Activated CD8-positive, alpha-beta T cell treated with anti-CD3 and anti-CD28 coated beads for 36 hours (primary cell): ENCODE measurements at regions of chr11 and their contacts with region 1.

Region 1: DNA sequence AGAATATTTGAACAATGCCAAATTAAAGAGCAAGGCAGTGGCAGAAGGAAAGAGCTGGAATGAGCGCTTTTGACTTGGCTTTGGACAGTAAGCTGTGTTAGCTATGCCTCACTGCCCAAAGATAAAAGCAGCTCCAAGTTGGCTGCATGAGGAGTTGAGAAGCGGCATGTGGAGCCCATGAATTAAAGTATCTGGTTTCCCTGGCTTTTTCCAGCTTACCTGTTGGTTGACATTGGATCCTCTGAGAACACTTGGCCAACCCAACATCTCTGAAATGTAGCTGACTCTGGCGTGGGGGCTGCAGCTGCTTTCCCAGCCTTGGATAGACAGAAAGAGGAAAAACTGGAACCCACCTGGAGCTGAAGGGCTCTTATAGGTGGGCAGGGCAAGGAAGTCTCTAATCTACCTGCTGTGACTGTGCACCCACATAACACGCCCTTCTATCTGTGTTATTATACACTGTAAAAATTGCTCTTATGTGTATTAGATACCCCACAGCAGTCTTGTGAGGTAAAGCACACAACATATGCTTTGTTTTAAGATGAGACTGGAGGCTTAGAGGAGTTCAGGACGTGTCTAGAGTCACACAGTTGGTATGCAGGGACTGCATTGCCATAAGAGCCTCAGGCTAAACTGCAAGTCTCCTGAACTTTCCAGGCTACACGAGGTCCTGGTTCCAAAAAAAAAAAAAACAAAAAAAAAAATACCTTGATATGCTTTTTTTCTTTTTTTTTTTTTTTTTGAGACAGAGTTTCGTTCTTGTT is 5.8 kb downstream of the UBASH3B start:
- DNase-seq: no peak
- ATAC-seq: no peak
- H3K4me3 Mint-ChIP-seq: no peak overlapping the region
- H3K27ac Mint-ChIP-seq: no peak overlapping the region
- H3K4me1 Mint-ChIP-seq: peaks cover 49% of the 10 kb centered on the region
- H3K27me3 Mint-ChIP-seq: no peaks in the 10 kb centered on the region
- CTCF ChIP-seq: no peak

Region 2: GRCh38 chr11:122468965-122469364 is 192.4 kb before region 1 on chr11:
- CTCF ChIA-PET with region 1: no interaction called
- POLR2A ChIA-PET with region 1: no interaction called
- intact Hi-C with region 1: no loop called
- DNase-seq: no peak
- ATAC-seq: no peak
- H3K4me3 Mint-ChIP-seq: no peak overlapping the region
- H3K27ac Mint-ChIP-seq: no peak overlapping the region
- H3K4me1 Mint-ChIP-seq: no peaks in the 10 kb centered on the region
- H3K27me3 Mint-ChIP-seq: peaks cover 3% of the 10 kb centered on the region
- CTCF ChIP-seq: no peak

Region 3: DNA sequence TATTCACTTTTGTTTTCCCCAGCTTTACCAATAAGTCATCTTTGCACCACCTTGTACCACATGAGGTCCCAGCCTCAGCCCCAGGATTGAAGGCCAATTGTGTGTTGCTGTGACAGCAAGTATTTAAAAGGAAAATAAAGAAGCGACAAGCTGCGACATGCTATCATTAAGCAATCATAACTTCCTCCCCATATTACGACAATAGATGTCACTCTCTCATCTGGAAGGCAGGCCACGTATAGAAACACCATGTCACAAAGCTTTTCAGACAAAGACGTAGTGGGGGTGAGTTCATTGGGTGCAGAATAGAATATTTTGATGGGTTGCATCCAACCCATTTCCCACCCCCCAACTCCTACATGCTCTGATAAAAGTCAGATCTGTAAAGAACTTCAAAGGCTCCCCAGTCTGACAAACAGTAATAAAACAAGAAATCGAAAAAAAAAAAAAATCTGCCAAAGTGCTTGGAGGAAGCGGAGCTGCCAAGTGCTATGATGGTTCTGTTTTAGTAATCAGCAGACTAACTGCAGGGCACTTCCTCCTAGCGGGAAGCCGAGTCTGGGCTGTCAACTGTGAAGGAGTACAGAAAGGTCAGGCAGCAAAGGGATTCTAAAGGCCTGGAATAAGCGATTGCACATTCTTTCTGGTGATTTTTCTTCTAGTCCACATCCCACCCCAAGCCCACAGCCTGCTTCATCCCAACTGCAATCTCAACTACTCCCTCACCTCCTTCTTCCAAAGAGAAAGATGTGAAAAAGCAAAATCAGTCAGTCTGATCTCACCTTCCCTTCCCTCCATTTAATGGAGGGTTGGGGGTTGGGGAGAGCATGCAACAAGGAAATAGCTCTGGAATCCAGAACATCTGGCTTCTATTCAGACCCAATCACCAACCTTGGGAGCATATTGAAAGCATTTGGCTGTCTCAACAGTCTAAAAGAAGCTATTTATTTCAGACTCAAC is 137.2 kb before region 1 on chr11:
- CTCF ChIA-PET with region 1: no interaction called
- POLR2A ChIA-PET with region 1: no interaction called
- intact Hi-C with region 1: no loop called
- DNase-seq: no peak
- ATAC-seq: no peak
- H3K4me3 Mint-ChIP-seq: no peak overlapping the region
- H3K27ac Mint-ChIP-seq: no peak overlapping the region
- H3K4me1 Mint-ChIP-seq: no peaks in the 10 kb centered on the region
- H3K27me3 Mint-ChIP-seq: peaks cover 27% of the 10 kb centered on the region
- CTCF ChIP-seq: no peak

Region 4: DNA sequence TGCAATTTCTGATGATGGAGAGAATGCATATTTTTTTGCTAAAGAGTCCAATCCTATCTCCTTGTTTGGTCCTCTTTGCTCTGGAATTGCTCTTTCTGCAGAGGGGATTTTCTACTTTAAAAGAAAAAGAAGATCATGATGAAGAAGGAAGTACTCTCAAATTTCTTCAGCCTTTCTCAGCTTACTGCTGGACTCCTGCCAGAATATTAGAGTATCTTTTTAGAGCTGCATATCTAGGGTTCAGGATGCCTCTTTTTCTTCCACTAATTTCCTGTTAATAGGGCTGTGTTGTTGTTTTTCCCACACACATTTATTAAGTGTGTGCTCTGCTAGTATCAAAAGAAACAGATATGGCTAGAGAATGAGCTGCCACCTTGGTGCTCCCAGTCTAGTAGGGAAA is 12.3 kb after region 1 on chr11:
- CTCF ChIA-PET with region 1: interaction called, 33 read pairs
- POLR2A ChIA-PET with region 1: interaction called, 32 read pairs
- intact Hi-C with region 1: no loop called
- DNase-seq: no peak
- ATAC-seq: no peak
- H3K4me3 Mint-ChIP-seq: no peak overlapping the region
- H3K27ac Mint-ChIP-seq: no peak overlapping the region
- H3K4me1 Mint-ChIP-seq: peaks cover 70% of the 10 kb centered on the region
- H3K27me3 Mint-ChIP-seq: no peaks in the 10 kb centered on the region
- CTCF ChIP-seq: no peak

Region 5: GRCh38 chr11:123006860-123007542 is 345.6 kb after region 1 on chr11:
- CTCF ChIA-PET with region 1: no interaction called
- POLR2A ChIA-PET with region 1: no interaction called
- intact Hi-C with region 1: no loop called
- DNase-seq: no peak
- ATAC-seq: no peak
- H3K4me3 Mint-ChIP-seq: no peak overlapping the region
- H3K27ac Mint-ChIP-seq: no peak overlapping the region
- H3K4me1 Mint-ChIP-seq: no peaks in the 10 kb centered on the region
- H3K27me3 Mint-ChIP-seq: peaks cover under 1% of the 10 kb centered on the region
- CTCF ChIP-seq: no peak